Activated CD8-positive, alpha-beta T cell treated with anti-CD3 and anti-CD28 coated beads for 36 hours (primary cell): ENCODE measurements at regions of chr6 and their contacts with region 1.

Region 1: GRCh38 chr6:90940812-90941481 is 354.1 kb upstream of the MAP3K7 start:
- DNase-seq: no peak
- ATAC-seq: peak; percentile 99
- H3K4me3 Mint-ChIP-seq: no peak overlapping the region
- H3K27ac Mint-ChIP-seq: no peak overlapping the region
- H3K4me1 Mint-ChIP-seq: peaks cover 5% of the 10 kb centered on the region
- H3K27me3 Mint-ChIP-seq: no peaks in the 10 kb centered on the region
- CTCF ChIP-seq: peak; percentile 35

Region 2: GRCh38 chr6:90928051-90928450 is 12.9 kb before region 1 on chr6:
- CTCF ChIA-PET with region 1: interaction called, 15 read pairs
- POLR2A ChIA-PET with region 1: no interaction called
- intact Hi-C with region 1: no loop called
- DNase-seq: no peak
- ATAC-seq: no peak
- H3K4me3 Mint-ChIP-seq: no peak overlapping the region
- H3K27ac Mint-ChIP-seq: no peak overlapping the region
- H3K4me1 Mint-ChIP-seq: no peaks in the 10 kb centered on the region
- H3K27me3 Mint-ChIP-seq: peaks cover 9% of the 10 kb centered on the region
- CTCF ChIP-seq: no peak

Region 3: GRCh38 chr6:91081452-91082067 is 140.6 kb after region 1 on chr6:
- CTCF ChIA-PET with region 1: interaction called, 14 read pairs
- POLR2A ChIA-PET with region 1: no interaction called
- intact Hi-C with region 1: no loop called
- DNase-seq: no peak
- ATAC-seq: no peak
- H3K4me3 Mint-ChIP-seq: no peak overlapping the region
- H3K27ac Mint-ChIP-seq: no peak overlapping the region
- H3K4me1 Mint-ChIP-seq: no peaks in the 10 kb centered on the region
- H3K27me3 Mint-ChIP-seq: no peaks in the 10 kb centered on the region
- CTCF ChIP-seq: peak; percentile 68